HEK293 (cell line): ENCODE measurements at regions of chr6 and their contacts with region 1.

Region 1: GRCh38 chr6:158213925-158214674 is 46.0 kb downstream of the GTF2H5 start:
- H3K4me3 ChIP-seq: no peak overlapping the region
- H3K27ac ChIP-seq: no peak overlapping the region
- H3K4me1 ChIP-seq: no peaks in the 10 kb centered on the region
- CTCF ChIP-seq: peak; percentile 76

Region 2: DNA sequence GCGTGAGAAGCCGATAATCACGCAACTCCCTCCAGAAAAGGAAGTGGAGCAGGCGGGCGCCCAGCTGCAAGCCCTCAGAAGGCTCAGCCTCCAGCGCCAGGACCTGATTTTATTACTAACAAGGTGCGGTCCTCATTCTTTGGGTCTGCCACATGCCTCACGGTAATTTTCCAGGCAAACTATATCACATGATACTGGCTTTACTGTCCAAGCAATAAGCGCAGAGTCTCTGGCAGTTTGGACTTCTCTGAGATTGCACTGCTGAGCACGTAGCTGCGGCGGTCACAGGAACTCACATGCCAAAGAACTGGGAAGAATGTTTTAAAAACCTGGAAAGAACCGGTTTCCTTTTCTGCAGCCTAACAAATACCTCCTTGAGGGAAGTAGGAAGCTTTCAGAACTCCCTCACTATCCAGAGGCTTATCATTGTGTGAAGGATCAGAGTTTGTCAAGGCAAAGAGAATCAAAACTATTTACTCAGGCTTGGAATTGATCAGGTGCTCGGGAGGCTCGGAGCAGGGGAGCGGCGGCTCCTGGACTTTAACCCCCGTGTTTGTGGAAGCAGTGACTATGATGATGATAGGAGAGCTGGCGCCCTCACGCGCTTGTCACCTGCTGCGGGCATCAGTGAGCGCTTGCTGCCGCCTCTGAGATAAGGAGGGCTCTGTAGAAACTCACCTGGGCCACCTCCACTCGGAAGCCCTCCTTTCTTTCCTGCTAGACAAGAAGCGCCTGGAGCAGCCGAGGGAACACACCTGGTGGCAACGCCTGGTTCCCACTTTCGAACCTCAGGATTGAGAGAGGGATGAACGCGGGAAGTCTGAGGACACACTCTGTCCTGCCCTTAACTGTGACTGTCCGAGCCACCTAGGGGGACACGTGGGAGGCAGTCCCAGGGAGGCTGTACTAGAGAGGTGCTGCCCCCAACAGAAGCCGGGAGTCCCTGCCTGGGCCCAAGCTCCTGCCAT is 259.7 kb before region 1 on chr6:
- CTCF ChIA-PET with region 1: no interaction called
- POLR2A ChIA-PET with region 1: no interaction called
- H3K4me3 ChIP-seq: no peak overlapping the region
- H3K27ac ChIP-seq: no peak overlapping the region
- H3K4me1 ChIP-seq: no peaks in the 10 kb centered on the region
- CTCF ChIP-seq: no peak

Region 3: GRCh38 chr6:158198461-158198860 is 15.6 kb before region 1 on chr6:
- CTCF ChIA-PET with region 1: interaction called, 15 read pairs
- POLR2A ChIA-PET with region 1: no interaction called
- H3K4me3 ChIP-seq: no peak overlapping the region
- H3K27ac ChIP-seq: no peak overlapping the region
- H3K4me1 ChIP-seq: no peaks in the 10 kb centered on the region
- CTCF ChIP-seq: no peak

Region 4: GRCh38 chr6:158605266-158605878 is 391.3 kb after region 1 on chr6:
- CTCF ChIA-PET with region 1: interaction called, 39 read pairs
- POLR2A ChIA-PET with region 1: no interaction called
- H3K4me3 ChIP-seq: no peak overlapping the region
- H3K27ac ChIP-seq: no peak overlapping the region
- H3K4me1 ChIP-seq: no peaks in the 10 kb centered on the region
- CTCF ChIP-seq: no peak; the same call in 1 of the 2 replicates

Region 5: DNA sequence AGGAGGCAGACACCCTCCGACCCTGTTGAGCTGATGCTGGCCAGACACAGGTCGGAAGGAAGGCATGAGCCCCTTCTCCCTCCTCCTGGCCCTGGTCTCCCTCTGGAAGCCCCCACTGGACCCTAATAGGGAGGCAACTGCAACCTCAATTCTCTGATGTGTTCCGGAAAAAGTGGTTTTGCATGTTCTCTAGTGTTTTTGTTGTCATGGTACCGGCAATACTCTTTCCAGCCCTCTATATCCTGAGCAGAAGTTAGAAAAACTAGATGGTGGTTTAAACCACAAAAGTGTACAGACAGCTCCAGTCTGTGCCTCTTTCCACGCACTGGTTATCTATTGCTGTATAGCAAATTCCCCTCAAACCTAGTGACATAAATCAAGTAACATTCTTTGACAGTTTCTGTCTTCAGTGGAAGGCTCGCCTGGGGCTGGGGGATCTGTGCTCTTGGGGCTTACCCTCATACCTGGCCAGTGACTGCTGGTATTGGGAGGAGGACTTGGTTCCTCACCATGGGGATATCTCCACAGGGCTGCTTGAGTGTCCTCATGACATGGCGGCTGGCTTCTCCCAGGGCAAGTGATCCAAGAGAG is 472.8 kb after region 1 on chr6:
- CTCF ChIA-PET with region 1: interaction called, 62 read pairs
- POLR2A ChIA-PET with region 1: no interaction called
- H3K4me3 ChIP-seq: no peak overlapping the region
- H3K27ac ChIP-seq: no peak overlapping the region
- H3K4me1 ChIP-seq: no peaks in the 10 kb centered on the region
- CTCF ChIP-seq: no peak

Region 6: DNA sequence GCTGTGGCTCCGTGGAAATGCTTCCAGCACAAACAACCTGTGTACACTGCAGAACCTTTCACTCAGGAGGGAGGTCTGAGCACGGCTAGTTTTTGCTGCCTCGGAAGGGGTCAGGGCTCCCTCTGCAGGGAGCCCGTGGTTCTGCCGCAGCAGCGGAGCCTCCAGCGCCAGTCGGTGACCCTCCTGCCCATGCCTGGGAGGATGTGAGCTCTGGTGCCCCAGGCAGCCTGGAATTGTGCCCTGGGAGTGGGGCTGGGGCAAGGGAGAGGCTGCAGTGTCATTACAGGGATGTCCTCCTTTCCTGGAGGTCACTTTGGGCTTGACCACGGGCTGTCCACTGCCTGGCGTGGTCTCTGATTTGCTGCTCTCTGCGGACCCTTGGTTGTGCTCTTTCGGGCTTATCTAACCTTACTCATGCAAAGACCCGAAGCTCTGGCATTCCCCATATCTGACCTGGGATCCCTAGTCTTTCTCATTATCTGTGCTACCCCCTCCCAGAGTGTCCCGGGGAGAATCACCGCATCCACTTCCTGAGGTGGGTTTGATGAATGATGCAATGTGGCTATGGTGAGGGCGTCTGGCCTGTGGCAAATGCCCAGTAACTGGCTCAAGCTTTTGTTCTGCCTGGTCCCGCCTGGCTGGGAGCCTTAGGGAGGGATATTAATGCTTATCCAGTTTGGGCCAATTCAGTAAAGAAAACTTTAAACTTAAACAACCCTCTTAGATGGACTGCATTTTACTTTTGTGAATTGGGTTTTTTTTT is 890.2 kb after region 1 on chr6:
- CTCF ChIA-PET with region 1: interaction called, 10 read pairs
- POLR2A ChIA-PET with region 1: no interaction called
- H3K4me3 ChIP-seq: no peak overlapping the region
- H3K27ac ChIP-seq: no peak overlapping the region
- H3K4me1 ChIP-seq: no peaks in the 10 kb centered on the region
- CTCF ChIP-seq: peak; percentile 77